Heart left ventricle (tissue), 16 donors: ENCODE measurements at regions of chr6 and their contacts with region 1.

Region 1: DNA sequence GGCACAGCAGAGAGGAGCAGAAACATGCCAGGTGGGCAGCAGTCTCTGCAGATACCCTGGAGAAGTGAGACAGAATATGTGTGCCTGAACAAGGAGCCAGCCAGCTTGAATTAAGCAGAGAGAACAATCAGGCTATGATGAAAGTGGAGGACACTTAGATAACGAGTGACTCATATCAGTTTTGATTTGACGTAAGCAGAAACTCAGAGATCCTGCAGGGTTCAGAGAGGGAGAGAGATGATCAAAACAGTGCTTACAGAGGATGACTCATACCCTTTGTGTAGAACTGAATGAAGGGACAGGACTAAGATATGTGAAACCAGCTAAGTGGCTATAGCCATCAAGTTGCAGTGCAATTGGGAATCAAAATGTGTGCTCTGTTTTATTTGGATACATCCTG is 300.7 kb downstream of the TENT5A start:
- DNase-seq: peak in 1 of 5 donors; percentile 28
- ATAC-seq: peak; percentile 84 to 98 (median 92)
- H3K4me3 ChIP-seq: no peak overlapping the region
- H3K27ac ChIP-seq: peak overlapping the region in 1 of 12 donors; percentile 51
- H3K4me1 ChIP-seq: peaks cover 0 to 9% (median 0%) of the 10 kb centered on the region in 12 donors
- H3K27me3 ChIP-seq: no peaks in the 10 kb centered on the region
- CTCF ChIP-seq: no peak
- POLR2A ChIP-seq: no peak

Region 2: DNA sequence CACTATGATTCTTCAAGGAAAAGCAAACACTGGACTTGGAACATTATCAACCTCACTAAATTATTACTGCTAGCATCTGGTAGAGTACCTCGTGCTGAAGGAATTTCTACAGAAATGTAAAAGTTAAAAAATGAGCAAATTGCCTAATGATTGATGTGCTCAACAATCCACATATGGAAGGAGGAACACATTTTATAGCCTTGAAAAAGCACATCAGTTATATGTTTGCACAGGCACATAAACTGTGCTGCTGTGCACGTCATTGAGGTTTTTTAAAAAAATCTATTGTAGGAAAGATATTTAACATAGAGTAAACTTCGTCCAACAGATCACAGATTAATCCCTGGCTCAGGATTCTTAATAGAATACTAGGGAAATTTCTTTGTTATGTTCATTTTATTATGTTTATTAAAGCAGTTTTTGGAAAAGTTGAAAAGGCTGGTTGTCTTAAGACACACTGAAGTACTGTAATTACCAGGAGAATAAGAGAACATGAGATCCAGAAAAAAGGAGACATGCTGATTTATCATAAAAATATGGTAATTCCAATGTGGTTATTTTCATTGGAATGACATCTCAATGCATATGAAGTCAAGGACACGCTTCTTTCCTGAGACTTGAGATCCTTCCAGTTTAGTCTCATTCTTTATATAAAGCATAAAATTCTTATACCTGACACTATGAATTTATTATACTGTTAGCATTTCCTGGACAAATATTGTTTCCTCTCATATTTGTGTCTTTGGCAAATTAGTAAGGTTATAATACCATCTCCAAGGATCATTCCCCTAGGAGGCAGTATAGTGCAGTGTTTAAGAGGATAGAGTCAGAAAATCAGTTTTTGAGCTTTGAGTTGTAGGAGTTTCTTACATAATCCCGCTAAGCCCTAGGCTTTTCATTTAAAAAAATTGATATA is 210.4 kb before region 1 on chr6:
- intact Hi-C with region 1: loop called in 1 of 10 experiments (anchors 10 kb)
- DNase-seq: no peak
- ATAC-seq: peak in 2 of 4 donors; percentile 45 to 55
- H3K4me3 ChIP-seq: no peak overlapping the region
- H3K27ac ChIP-seq: no peak overlapping the region
- H3K4me1 ChIP-seq: no peaks in the 10 kb centered on the region
- H3K27me3 ChIP-seq: no peaks in the 10 kb centered on the region
- CTCF ChIP-seq: peak in 11 of 12 donors; percentile 22 to 60 (median 42)
- POLR2A ChIP-seq: no peak

Region 3: GRCh38 chr6:81401970-81402690 is 49.7 kb before region 1 on chr6:
- intact Hi-C with region 1: no loop called
- DNase-seq: no peak
- ATAC-seq: peak; percentile 64 to 91 (median 76)
- H3K4me3 ChIP-seq: no peak overlapping the region
- H3K27ac ChIP-seq: peak overlapping the region in 4 of 12 donors; percentile 33 to 59 (median 46)
- H3K4me1 ChIP-seq: peaks cover 0 to 16% (median 9%) of the 10 kb centered on the region in 12 donors
- H3K27me3 ChIP-seq: no peaks in the 10 kb centered on the region
- CTCF ChIP-seq: no peak
- POLR2A ChIP-seq: no peak

Region 4: GRCh38 chr6:81553216-81553615 is 101.4 kb after region 1 on chr6:
- intact Hi-C with region 1: no loop called
- DNase-seq: no peak
- ATAC-seq: no peak
- H3K4me3 ChIP-seq: no peak overlapping the region
- H3K27ac ChIP-seq: no peak overlapping the region
- H3K4me1 ChIP-seq: peaks cover 0 to 10% (median 0%) of the 10 kb centered on the region in 12 donors
- H3K27me3 ChIP-seq: no peaks in the 10 kb centered on the region
- CTCF ChIP-seq: no peak
- POLR2A ChIP-seq: no peak